ENCODE measurements at regions of chr18 and their contacts with region 1.

Region 1: DNA sequence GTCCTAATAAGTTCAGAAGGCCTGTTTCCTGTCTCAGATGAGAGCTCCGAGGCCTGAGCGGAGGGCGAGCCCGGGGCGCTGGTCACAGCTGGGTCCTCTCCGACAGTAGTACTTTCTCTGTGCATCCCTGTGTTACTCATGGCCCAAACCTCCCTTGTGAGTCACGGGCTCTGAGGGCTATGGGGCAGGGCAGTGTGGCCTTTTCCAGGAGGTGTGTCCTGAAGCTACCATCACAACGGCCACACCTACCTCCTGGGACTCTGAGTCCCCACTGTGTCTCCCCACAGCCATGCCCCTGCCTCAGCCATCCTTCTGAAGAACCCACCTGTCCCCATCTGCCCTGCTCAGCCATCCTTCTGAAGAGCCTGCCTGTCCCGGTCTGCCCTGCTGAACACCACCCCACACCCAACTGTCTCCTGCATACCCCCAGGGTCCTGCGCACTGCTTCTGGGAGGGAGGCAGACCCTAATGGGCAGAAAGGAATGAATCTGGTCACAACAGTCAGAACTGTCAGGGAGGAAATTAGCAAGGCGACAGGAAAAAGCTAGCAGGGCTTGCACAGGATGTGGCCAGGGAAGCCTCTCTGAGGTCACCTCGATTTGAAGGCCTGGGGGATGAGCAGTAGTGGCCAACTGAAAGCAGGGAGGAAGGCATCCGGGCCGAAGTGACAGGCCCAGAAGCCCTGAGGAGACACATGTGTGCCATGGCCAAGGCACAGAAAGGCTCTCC is 145.4 kb upstream of the RIOK3 start:
- DNase-seq: peak; percentile 31
- H3K4me3 Mint-ChIP-seq: peak overlapping the region; percentile 24
- H3K27ac Mint-ChIP-seq: peak overlapping the region; percentile 74
- H3K4me1 Mint-ChIP-seq: peaks cover 45% of the 10 kb centered on the region
- H3K27me3 Mint-ChIP-seq: no peaks in the 10 kb centered on the region

Region 2: GRCh38 chr18:23356915-23357601 is 49.3 kb after region 1 on chr18:
- intact Hi-C with region 1: loop called (anchors 2 kb)
- DNase-seq: no peak
- H3K4me3 Mint-ChIP-seq: no peak overlapping the region
- H3K27ac Mint-ChIP-seq: no peak overlapping the region
- H3K4me1 Mint-ChIP-seq: peaks cover 21% of the 10 kb centered on the region
- H3K27me3 Mint-ChIP-seq: no peaks in the 10 kb centered on the region

Measured in activated T-helper 1 cell treated with anti-CD3 and anti-CD28 coated beads, Interleukin-12 subunit alpha, Interleukin-12 subunit beta, Interleukin-2, Interleukin-4 antibody, amounts not matched to agents 30 ng/mL and 10 ng/mL and 1 ng/mL, durations not matched to agents 14 hours and 24 hours and 36 hours (primary cell).